ENCODE measurements at regions of chr16 and their contacts with region 1.

Region 1: GRCh38 chr16:72654535-72654934 is 393.4 kb downstream of the ZFHX3 start:
- DNase-seq: no peak
- H3K4me3 ChIP-seq: no peak overlapping the region
- H3K27ac ChIP-seq: no peak overlapping the region
- H3K4me1 ChIP-seq: peaks cover 0 to 5% (median 0%) of the 10 kb centered on the region in 4 experiments
- H3K27me3 ChIP-seq: no peaks in the 10 kb centered on the region

Region 2: DNA sequence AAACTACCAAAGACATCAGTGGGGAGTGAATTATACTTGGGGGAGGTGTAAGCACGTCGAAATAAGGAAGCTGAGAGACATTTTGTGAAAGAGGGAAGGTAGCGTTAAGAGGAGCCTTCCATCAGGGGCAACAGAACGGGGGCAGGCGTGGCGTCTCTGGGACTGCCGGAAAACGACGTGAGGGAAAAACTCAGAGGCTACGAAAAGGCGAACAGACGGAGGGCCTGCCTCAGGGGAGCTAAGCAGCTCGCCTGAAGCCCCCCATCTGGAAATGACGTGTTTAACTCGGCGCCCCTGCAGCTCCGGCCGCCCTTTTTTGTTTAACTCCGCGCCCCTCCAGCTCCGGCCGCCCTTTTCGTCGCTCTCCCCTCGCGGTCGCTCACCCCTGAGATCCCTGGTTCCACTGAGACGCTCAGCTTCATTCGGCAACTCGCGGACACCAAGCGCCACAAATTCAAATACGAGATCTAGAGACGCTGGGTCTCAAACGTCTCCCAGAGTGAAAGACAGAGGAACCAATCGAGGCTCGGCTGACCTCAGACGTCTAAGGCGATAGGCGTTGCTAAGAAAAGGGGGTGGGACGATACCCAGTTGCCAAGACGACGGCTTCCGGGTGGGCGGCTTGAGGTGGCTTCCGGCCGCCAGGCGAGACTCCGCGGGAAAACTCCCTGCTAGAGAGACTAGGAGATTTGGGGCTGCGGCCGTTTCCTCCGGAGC is 10.1 kb after region 1 on chr16:
- CTCF ChIA-PET with region 1: interaction called, 10 read pairs
- POLR2A ChIA-PET with region 1: no interaction called
- DNase-seq: peak; percentile 98 to 99 (median 99)
- H3K4me3 ChIP-seq: peak overlapping the region; percentile 82 to 98 (median 94)
- H3K27ac ChIP-seq: peak overlapping the region; percentile 94 to 97
- H3K4me1 ChIP-seq: peaks cover 3 to 9% (median 6%) of the 10 kb centered on the region in 4 experiments
- H3K27me3 ChIP-seq: no peaks in the 10 kb centered on the region

Measured in common myeloid progenitor, CD34-positive (primary cell).